Posterior vena cava (tissue), 2 donors: ENCODE measurements at regions of chr21 and their contacts with region 1.

Region 1: GRCh38 chr21:36902796-36903195 is 63.7 kb downstream of the HLCS start:
- DNase-seq: no peak

Region 2: DNA sequence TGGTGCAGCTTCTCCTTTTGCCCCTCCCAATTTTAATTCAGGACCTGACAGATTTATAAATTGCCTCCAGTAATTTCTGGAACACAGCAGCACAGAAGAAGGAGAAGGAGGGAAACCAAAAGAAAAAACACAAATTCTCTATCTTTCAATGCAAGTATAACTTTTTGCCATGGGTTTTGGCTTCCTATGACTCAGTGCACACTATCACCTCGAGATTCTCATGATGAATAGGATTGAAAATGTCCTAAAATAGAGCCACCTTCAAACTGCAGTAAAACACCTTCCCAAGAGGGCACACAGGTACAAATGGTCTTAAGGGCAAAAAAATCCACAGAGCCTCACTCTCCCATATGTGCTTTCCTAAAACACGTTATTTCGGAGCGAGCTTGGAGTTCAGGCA is 49.9 kb before region 1 on chr21:
- intact Hi-C with region 1: loop called in 1 of 2 experiments (anchors 1 kb)
- DNase-seq: no peak

Region 3: DNA sequence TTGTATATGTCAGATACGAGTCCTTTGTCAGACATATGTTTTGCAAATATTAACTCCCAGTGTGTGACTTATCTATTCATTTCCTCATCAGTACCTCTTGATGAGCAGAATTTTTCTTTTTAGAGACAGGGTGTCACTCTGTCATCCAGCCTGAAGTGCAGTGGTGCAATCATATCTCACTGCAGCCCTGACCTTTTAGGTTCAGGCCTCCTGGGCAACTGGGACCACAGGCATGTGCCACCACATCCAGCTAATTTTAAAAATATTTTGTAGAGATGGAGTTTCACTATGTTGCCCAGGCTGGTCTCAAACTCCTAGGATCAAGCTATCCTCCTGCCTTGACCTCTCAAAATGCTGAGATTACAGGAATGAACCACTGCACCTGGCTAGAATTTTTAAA is 29.3 kb before region 1 on chr21:
- intact Hi-C with region 1: no loop called
- DNase-seq: no peak